Posterior vena cava (tissue), 2 donors: ENCODE measurements at regions of chr16 and their contacts with region 1.

Region 1: GRCh38 chr16:17984810-17985209 is 351.7 kb downstream of the NPIPA8 start:
- DNase-seq: no peak

Region 2: GRCh38 chr16:18060351-18060750 is 75.5 kb after region 1 on chr16:
- intact Hi-C with region 1: loop called in 1 of 2 experiments (anchors 2 kb)
- DNase-seq: no peak